ENCODE measurements at regions of chr22 and their contacts with region 1.

Region 1: DNA sequence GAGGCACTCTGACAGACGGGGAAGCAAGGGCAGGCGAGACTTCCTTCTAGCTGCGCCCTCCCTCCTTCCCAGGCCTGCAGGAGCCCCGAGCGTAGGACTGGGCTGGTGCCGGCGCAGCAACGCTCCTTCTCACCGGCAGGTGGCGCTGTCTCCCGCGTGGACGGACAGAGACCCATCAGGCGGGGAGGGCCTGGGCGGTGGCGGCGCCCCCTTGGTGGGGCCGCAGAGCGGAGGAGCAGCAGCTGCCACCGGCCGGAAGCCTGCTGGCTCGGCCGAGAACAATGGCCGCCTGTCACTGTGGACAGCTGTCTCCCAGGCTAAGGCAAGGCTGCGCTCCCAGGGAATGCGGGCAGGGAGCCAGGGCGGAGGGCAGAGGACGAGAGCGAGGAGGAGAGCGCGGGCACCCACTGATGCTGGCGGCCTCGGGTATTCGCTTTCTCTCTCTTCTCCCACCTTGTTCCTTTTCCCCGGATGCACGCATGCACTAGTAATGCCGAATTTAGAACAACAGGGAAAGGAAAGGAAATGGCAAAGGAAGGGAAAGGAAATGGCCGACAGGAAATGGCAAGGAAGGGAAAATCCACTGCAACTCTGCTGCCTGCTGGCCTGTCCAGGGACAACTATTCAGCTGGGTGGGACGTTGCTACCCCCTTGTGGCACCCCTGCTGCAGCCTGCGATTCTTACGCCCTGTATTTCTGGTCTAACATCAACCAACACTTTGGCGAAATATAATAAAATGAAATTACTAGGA is 14.4 kb downstream of the PPM1F start:
- DNase-seq: peak; percentile 88
- H3K4me3 ChIP-seq: peak overlapping the region; percentile 65
- H3K27ac ChIP-seq: peak overlapping the region; percentile 79
- H3K27me3 ChIP-seq: no peaks in the 10 kb centered on the region
- CTCF ChIP-seq: peak; percentile 99

Region 2: DNA sequence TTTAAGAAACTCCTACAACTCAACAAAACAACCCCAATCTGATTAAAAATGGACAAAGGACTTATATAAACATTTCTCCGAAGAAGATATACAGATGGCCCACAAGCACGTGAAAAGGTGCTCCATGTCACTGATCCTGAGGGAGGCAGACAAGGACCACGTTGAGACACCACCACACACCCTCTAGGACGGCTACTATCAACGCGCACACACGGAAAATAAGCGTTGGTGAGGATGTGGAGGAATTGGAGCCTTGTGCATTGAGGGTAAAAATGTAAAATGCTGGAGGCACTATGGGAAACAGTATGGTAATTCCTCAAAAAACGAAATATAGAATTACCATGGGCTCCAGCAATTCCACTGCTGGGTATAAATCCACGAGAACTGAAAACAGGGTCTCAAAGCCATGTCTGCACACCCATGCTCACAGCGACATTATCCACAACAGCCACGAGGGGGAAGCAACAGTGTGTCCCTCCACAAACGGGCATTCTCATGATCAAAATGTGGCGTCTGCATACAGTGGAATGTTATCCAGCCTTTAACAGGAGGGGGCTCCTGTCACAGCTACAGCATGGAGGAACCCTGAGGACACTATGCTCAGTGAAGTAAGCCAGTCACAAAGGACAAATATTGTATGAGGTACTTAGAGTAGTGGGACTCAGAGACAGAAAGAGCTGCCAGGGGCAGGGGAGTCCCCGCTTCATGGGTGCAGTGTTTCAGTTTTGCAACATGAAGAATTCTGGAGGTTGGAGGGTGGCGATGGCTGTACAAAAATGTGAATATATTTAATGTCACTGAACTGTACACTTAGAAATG is 225.1 kb before region 1 on chr22:
- in situ Hi-C with region 1: loop called (anchors 25 kb)
- DNase-seq: peak; percentile 71
- H3K4me3 ChIP-seq: peak overlapping the region; percentile 2
- H3K27ac ChIP-seq: no peak overlapping the region
- H3K27me3 ChIP-seq: no peaks in the 10 kb centered on the region
- CTCF ChIP-seq: peak; percentile 88

Region 3: DNA sequence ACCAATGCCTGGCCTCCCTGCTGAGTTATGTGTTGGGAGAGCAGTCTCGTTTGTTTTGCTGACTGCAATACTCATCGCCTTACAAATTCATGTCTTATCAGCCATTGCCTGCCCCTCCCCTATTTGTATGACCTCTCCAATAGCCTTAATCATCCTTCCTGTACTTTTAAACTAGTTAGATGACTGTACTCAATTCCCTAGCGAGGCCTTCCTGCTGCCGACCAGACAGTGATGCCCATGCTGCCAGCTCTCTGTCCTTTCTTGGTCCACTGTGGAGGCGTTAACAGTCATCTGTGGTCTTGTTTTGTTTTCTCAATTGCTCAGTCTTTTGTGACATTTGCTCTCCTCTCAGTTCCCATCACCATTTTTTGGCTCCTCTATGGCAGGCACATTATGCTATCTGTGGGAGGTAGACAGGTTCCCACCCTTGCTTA is 182.4 kb before region 1 on chr22:
- in situ Hi-C with region 1: no loop called
- DNase-seq: peak; percentile 92
- H3K4me3 ChIP-seq: no peak overlapping the region
- H3K27ac ChIP-seq: peak overlapping the region; percentile 90
- H3K27me3 ChIP-seq: peaks cover 2% of the 10 kb centered on the region
- CTCF ChIP-seq: no peak